SK-N-SH (cell line): ENCODE measurements at regions of chr2 and their contacts with region 1.

Region 1: GRCh38 chr2:43576981-43577892 is 18.6 kb downstream of the THADA start:
- DNase-seq: peak; percentile 49
- H3K4me3 ChIP-seq: no peak overlapping the region
- H3K27ac ChIP-seq: peak overlapping the region in 1 of 2 experiments; percentile 57; a peak in 1 of 4 replicates
- H3K4me1 ChIP-seq: no peaks in the 10 kb centered on the region
- H3K27me3 ChIP-seq: no peaks in the 10 kb centered on the region
- CTCF ChIP-seq: peak; percentile 99
- EP300 ChIP-seq: no peak
- RAD21 ChIP-seq: peak; percentile 68

Region 2: DNA sequence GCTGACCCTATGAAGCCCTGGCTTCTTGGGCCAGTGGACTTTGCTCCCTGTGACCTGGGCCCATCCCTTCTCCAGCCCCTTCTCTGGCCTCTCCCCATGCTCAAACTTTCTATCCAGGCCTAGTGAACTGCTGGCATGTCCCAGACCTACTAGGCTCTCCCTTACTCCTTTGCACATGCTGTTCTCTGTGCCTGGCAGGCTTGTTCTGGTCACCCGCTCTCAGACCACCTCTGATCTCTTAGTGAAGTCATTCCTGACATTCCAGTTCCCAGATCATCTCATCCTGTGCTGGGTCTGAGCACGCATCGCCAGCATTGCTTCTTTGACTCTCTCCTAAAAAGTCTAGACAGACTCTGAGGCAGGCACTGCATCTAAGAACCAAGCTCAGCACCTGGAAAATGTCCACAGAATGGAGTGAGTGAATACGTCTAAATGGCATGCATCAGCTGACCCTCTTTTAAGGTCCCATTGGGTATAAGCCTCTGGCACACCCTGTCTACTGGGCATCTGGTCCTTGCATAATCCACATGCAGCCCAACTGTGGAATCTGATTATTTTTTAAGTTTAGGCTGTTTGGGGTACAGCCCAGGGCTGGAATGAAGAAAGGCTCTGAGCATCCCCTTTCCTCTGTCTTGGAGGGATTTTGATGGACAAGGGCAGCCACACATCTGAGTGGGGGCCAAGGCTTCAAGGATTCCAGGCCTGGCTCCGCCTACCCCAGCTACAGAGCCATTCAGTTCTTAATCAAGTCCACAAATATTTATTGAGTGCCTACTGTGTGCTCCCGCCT is 654.3 kb before region 1 on chr2:
- CTCF ChIA-PET with region 1: interaction called, 10 read pairs
- POLR2A ChIA-PET with region 1: no interaction called
- DNase-seq: no peak
- H3K4me3 ChIP-seq: no peak overlapping the region
- H3K27ac ChIP-seq: peak overlapping the region; percentile 7 to 93; a peak in 3 of 4 replicates
- H3K4me1 ChIP-seq: peaks cover 39 to 48% of the 10 kb centered on the region in 2 experiments
- H3K27me3 ChIP-seq: no peaks in the 10 kb centered on the region
- CTCF ChIP-seq: no peak
- EP300 ChIP-seq: no peak
- RAD21 ChIP-seq: no peak

Region 3: GRCh38 chr2:43467891-43468290 is 109.3 kb before region 1 on chr2:
- CTCF ChIA-PET with region 1: no interaction called
- POLR2A ChIA-PET with region 1: no interaction called
- DNase-seq: no peak
- H3K4me3 ChIP-seq: no peak overlapping the region
- H3K27ac ChIP-seq: peak overlapping the region; percentile 53 to 79
- H3K4me1 ChIP-seq: peaks cover 3 to 21% of the 10 kb centered on the region in 2 experiments
- H3K27me3 ChIP-seq: no peaks in the 10 kb centered on the region
- CTCF ChIP-seq: no peak
- EP300 ChIP-seq: peak in 1 of 2 experiments; percentile 60; a peak in 1 of 4 replicates
- RAD21 ChIP-seq: no peak

Region 4: GRCh38 chr2:43542285-43542937 is 34.8 kb before region 1 on chr2:
- CTCF ChIA-PET with region 1: interaction called, 13 read pairs
- POLR2A ChIA-PET with region 1: no interaction called
- DNase-seq: peak; percentile 52
- H3K4me3 ChIP-seq: no peak overlapping the region
- H3K27ac ChIP-seq: peak overlapping the region in 1 of 2 experiments; percentile 28; a peak in 1 of 4 replicates
- H3K4me1 ChIP-seq: peaks cover 8 to 13% of the 10 kb centered on the region in 2 experiments
- H3K27me3 ChIP-seq: no peaks in the 10 kb centered on the region
- CTCF ChIP-seq: peak; percentile 78
- EP300 ChIP-seq: no peak
- RAD21 ChIP-seq: peak; percentile 81

Region 5: GRCh38 chr2:43559391-43560230 is 17.6 kb before region 1 on chr2:
- CTCF ChIA-PET with region 1: interaction called, 62 read pairs
- POLR2A ChIA-PET with region 1: no interaction called
- DNase-seq: no peak
- H3K4me3 ChIP-seq: no peak overlapping the region
- H3K27ac ChIP-seq: no peak overlapping the region
- H3K4me1 ChIP-seq: no peaks in the 10 kb centered on the region
- H3K27me3 ChIP-seq: no peaks in the 10 kb centered on the region
- CTCF ChIP-seq: no peak
- EP300 ChIP-seq: no peak
- RAD21 ChIP-seq: no peak

Region 6: GRCh38 chr2:43595603-43596412 is 18.6 kb after region 1 on chr2 and contains the start of gene THADA:
- CTCF ChIA-PET with region 1: interaction called, 27 read pairs
- POLR2A ChIA-PET with region 1: interaction called, 3 read pairs
- DNase-seq: peak; percentile 97
- H3K4me3 ChIP-seq: peak within 1 kb of the TSS; percentile 77 to 88
- H3K27ac ChIP-seq: peak within 1 kb of the TSS; percentile 89 to 98
- H3K4me1 ChIP-seq: peaks cover 7 to 11% of the 10 kb centered on the region in 2 experiments; a peak in 3 of 4 replicates
- H3K27me3 ChIP-seq: no peaks in the 10 kb centered on the region
- CTCF ChIP-seq: no peak
- EP300 ChIP-seq: no peak; a peak in 1 of 4 replicates
- RAD21 ChIP-seq: no peak
- polyA plus RNA-seq, gene THADA: 17.1 and 25.6 TPM in 2 replicates